A549 (cell line): ENCODE measurements at regions of chr6 and their contacts with region 1.

Region 1: GRCh38 chr6:47413752-47414422 is 63.7 kb upstream of the CD2AP start:
- DNase-seq: peak in 1 of 2 experiments; percentile 73
- ATAC-seq: peak; percentile 92
- H3K4me3 ChIP-seq: peak overlapping the region; percentile 35
- H3K27ac ChIP-seq: peak overlapping the region; percentile 73 to 83
- H3K4me1 ChIP-seq: peaks cover 11% of the 10 kb centered on the region
- CTCF ChIP-seq: peak; percentile 80
- EP300 ChIP-seq: no peak
- POLR2A ChIP-seq: no peak
- RAD21 ChIP-seq: peak; percentile 83 to 90

Region 2: DNA sequence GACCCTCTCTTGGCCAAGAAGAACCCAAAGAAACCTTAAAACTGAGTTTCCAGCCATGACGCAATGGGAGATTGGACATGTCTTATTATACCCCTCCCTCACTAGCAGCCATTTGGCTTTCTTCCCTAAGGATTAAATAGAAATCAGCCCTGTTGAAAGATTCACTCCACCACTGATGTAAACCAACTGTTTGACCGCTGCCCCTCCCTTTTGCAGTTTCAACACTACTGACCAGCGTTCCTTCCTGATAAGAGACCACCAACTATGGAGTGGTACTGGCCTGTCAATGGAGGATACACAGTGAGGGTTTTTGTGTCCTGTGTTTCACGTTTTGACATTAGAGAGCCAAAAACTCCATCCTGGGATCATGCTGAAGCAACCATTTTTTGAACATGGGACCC is 10.5 kb after region 1 on chr6:
- CTCF ChIA-PET with region 1: no interaction called
- POLR2A ChIA-PET with region 1: no interaction called
- DNase-seq: no peak
- ATAC-seq: no peak
- H3K4me3 ChIP-seq: no peak overlapping the region
- H3K27ac ChIP-seq: no peak overlapping the region
- H3K4me1 ChIP-seq: peaks cover 14% of the 10 kb centered on the region
- CTCF ChIP-seq: no peak
- EP300 ChIP-seq: no peak
- POLR2A ChIP-seq: no peak
- RAD21 ChIP-seq: no peak

Region 3: GRCh38 chr6:47446669-47447330 is 32.9 kb after region 1 on chr6:
- CTCF ChIA-PET with region 1: no interaction called
- POLR2A ChIA-PET with region 1: no interaction called
- DNase-seq: no peak
- ATAC-seq: no peak
- H3K4me3 ChIP-seq: no peak overlapping the region
- H3K27ac ChIP-seq: no peak overlapping the region
- H3K4me1 ChIP-seq: no peaks in the 10 kb centered on the region
- CTCF ChIP-seq: no peak
- EP300 ChIP-seq: no peak
- POLR2A ChIP-seq: no peak
- RAD21 ChIP-seq: no peak

Region 4: DNA sequence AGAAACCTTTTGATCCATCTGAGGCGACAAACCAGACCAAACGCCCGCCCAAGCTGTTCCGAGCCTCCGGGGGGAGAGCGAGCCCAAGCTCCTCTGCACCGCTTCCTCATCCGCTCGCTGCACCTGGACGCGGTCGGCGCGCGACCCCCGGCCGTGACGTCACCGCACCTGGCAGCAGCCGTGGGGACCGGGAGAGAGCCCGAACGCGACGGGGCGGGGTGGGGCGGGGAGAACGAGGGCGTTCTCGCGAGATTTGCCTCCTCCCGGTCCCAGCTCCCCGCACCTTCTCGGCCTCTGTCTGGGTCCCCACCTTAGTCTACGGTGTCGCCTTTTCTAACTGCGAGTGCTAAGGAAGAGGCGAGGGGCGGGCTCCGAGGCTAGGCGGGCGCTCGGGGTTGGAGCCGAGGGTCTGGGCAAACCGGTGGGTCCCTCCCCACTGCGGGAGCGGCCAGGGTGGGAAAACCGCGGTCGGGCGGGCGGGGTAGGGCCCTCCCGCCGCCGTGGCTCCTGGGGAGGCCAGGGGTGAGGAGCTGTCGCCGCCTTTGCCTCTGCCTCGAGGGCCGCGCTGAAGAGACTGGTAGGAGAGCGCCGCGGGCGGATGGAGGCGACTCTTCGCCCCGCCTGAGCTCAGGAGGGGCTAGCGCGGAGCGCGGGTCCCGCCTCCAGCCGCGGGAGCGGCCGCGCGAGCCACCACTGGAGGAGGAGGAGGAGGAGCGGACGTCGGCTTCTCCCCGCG is 63.8 kb after region 1 on chr6 and contains the start of gene CD2AP:
- CTCF ChIA-PET with region 1: interaction called, 6 read pairs
- POLR2A ChIA-PET with region 1: interaction called, 23 read pairs
- DNase-seq: peak; percentile 73 to 87
- ATAC-seq: peak; percentile 91 to 93
- H3K4me3 ChIP-seq: peak within 1 kb of the TSS; percentile 82
- H3K27ac ChIP-seq: peak within 1 kb of the TSS; percentile 96 to 100
- H3K4me1 ChIP-seq: peaks cover 32% of the 10 kb centered on the region
- CTCF ChIP-seq: no peak
- EP300 ChIP-seq: no peak
- POLR2A ChIP-seq: peak; percentile 48
- RAD21 ChIP-seq: no peak; a peak in 1 of 5 replicates
- polyA plus RNA-seq, gene CD2AP: 24.5 and 35.7 TPM in 2 replicates

Region 5: GRCh38 chr6:47780510-47781356 is 366.8 kb after region 1 on chr6:
- CTCF ChIA-PET with region 1: interaction called, 10 read pairs
- POLR2A ChIA-PET with region 1: no interaction called
- DNase-seq: peak; percentile 33 to 57
- ATAC-seq: peak; percentile 85 to 89
- H3K4me3 ChIP-seq: no peak overlapping the region
- H3K27ac ChIP-seq: peak overlapping the region; percentile 41 to 48; a peak in 3 of 6 replicates
- H3K4me1 ChIP-seq: no peaks in the 10 kb centered on the region
- CTCF ChIP-seq: peak; percentile 67
- EP300 ChIP-seq: no peak
- POLR2A ChIP-seq: no peak
- RAD21 ChIP-seq: peak; percentile 76 to 80